Heart right ventricle (tissue), 16 donors: ENCODE measurements at regions of chr10 and their contacts with region 1.

Region 1: DNA sequence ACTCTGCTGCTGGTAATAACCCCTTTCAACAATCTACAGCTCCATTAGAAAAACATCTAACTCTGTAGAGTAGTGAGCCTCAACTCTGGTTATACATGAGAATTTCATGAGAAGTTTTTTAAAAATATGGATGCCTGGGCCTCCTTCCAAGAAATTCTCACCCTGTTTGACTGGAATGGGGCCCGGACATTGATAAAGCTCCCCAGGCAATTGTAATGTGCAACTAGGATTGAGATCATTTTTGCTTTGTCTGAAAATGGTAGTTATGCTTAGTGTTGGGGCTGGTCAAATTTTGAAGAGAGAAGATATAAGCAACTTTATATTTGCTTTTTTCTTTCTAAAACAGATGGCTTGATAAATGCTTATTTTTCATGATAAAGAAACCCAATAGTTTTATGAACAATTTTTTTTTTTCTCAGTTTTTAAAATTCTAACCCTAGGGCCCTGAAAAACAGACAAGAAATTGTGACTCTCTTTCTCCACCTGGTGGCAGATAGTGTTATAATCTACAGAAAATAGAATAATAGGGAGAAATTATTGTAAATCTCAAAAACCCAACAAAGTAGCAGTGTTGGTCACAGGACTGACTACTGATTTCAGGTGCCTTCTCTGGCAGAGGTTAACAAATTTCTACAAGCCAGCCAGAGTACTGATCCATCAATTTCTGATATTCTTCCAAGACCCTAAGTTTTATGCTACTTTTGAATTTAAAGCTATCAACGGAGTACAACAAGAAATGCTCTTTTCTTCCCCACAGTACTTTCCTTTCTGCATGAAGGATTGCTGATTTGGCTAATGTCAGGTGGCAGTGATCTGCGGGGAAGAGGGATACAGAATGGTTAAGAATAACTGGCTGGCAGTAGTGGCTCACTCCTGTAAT is 174.8 kb downstream of the DKK1 start:
- DNase-seq: no peak
- ATAC-seq: no peak
- H3K4me3 ChIP-seq: no peak overlapping the region
- H3K27ac ChIP-seq: no peak overlapping the region
- H3K4me1 ChIP-seq: no peaks in the 10 kb centered on the region
- H3K27me3 ChIP-seq: no peaks in the 10 kb centered on the region
- CTCF ChIP-seq: peak; percentile 27 to 68 (median 55)

Region 2: GRCh38 chr10:50988792-50989191 is 1500.1 kb before region 1 on chr10:
- intact Hi-C with region 1: loop called in 1 of 10 experiments (anchors 5 kb)
- DNase-seq: no peak
- ATAC-seq: no peak
- H3K4me3 ChIP-seq: peak overlapping the region in 7 of 10 donors; percentile 9 to 79 (median 71)
- H3K27ac ChIP-seq: peak overlapping the region in 7 of 10 donors; percentile 5 to 94 (median 41)
- H3K4me1 ChIP-seq: peaks cover 0 to 20% (median 6%) of the 10 kb centered on the region in 9 donors
- H3K27me3 ChIP-seq: peaks cover 0 to 39% (median 0%) of the 10 kb centered on the region in 7 donors
- CTCF ChIP-seq: peak in 8 of 9 donors; percentile 15 to 63 (median 46)

Region 3: DNA sequence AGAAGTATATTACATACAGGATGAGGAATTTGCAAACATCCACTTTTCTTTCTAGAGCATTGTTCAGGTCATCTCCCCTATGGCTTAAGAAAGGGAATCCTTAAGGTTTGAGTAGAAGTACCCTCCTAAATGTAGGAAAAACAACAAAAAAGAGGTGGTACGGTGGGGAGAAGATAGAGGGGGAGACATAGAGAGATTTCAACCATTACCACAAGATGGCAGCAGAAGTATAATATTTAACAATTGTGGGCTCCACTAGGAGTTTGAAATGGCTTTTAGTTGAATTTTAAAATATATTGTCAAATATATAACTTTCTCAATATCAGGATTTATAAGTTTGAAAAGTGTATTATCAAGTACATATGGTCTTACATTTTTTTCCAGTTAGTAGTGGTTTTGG is 1487.3 kb before region 1 on chr10:
- intact Hi-C with region 1: loop called in 1 of 10 experiments (anchors 5 kb)
- DNase-seq: no peak
- ATAC-seq: peak in 5 of 8 donors; percentile 54 to 88 (median 65)
- H3K4me3 ChIP-seq: no peak overlapping the region
- H3K27ac ChIP-seq: peak overlapping the region in 6 of 10 donors; percentile 3 to 59 (median 38)
- H3K4me1 ChIP-seq: peaks cover 0 to 74% (median 12%) of the 10 kb centered on the region in 9 donors
- H3K27me3 ChIP-seq: peaks cover 0 to 3% (median 0%) of the 10 kb centered on the region in 7 donors
- CTCF ChIP-seq: peak; percentile 31 to 73 (median 65)

Region 4: GRCh38 chr10:52308251-52309031 is 180.4 kb before region 1 on chr10:
- intact Hi-C with region 1: loop called (anchors 1 to 5 kb)
- DNase-seq: peak; percentile 36 to 46
- ATAC-seq: peak; percentile 80 to 92 (median 88)
- H3K4me3 ChIP-seq: peak overlapping the region; percentile 6 to 60 (median 52)
- H3K27ac ChIP-seq: no peak overlapping the region
- H3K4me1 ChIP-seq: peaks cover 0 to 9% (median 6%) of the 10 kb centered on the region in 9 donors
- H3K27me3 ChIP-seq: peaks cover 0 to 57% (median 21%) of the 10 kb centered on the region in 7 donors
- CTCF ChIP-seq: peak; percentile 28 to 75 (median 66)

Region 5: DNA sequence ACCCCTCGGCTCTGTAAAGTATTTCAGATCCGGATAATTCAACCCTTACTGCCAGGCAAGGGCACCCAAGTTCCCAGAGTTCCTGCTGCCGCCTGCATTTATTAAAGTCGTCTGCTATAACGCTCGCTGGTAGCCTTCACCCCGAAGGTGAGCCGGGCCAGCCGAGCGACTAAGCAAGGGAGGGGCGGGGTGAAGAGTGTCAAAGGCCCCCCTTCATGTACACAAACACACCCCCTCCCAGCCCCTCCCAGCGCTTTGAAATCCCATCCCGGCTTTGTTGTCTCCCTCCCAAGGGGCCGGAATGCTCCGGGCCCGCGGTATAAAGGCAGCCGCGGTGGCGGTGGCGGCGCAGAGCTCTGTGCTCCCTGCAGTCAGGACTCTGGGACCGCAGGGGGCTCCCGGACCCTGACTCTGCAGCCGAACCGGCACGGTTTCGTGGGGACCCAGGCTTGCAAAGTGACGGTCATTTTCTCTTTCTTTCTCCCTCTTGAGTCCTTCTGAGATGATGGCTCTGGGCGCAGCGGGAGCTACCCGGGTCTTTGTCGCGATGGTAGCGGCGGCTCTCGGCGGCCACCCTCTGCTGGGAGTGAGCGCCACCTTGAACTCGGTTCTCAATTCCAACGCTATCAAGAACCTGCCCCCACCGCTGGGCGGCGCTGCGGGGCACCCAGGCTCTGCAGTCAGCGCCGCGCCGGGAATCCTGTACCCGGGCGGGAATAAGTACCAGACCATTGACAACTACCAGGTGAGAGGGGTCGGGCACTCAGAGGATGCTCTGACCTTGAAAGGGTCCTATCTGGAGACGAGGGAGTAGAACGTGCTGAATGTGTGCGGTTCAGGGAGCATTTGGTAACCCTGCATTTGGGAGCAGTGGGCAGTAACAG is 174.7 kb before region 1 on chr10 and contains the start of gene DKK1:
- intact Hi-C with region 1: loop called in 9 of 10 experiments (anchors 2 to 5 kb)
- DNase-seq: peak; percentile 25 to 55
- ATAC-seq: peak; percentile 35 to 90 (median 84)
- H3K4me3 ChIP-seq: peak within 1 kb of the TSS; percentile 27 to 62 (median 54)
- H3K27ac ChIP-seq: no peak within 1 kb of the TSS
- H3K4me1 ChIP-seq: peaks cover 0 to 20% (median 17%) of the 10 kb centered on the region in 9 donors
- H3K27me3 ChIP-seq: peaks cover 0 to 66% (median 29%) of the 10 kb centered on the region in 7 donors
- CTCF ChIP-seq: peak; percentile 31 to 65 (median 61)
- total RNA-seq, gene DKK1: 0.26 to 1.2 (median 0.47) TPM in 5 of 10 donors, not detected in the others

Region 6: DNA sequence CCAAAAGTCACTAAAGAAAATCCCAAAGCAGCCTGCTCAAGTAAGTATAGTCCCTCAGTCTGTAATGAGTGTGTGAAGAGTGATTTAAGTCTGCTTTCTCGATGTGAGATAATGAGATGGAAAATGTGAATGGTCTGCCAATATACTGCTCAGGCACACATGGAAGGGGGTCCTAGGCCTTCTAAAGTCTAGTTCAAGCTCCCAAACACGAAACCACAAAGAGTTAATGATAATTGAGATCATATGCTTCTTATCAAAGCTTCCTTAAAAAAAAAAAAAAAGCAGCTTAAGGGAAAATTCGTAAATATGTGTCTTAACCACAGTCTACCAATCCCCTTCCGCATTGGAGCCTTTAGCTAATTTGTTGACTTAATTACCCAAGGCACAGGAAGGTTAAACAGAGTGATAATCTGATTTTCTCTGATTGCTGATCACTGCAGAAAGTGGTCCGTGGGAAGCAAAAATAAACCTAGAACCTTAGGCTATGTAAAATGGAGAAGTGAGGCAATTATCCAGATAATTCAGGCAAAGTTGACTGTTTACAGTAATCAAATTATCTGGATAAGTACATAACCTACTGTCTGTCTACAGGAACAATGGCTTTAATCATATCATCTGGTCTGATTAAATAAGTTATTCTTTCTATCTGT is 110.8 kb after region 1 on chr10:
- intact Hi-C with region 1: no loop called
- DNase-seq: no peak
- ATAC-seq: no peak
- H3K4me3 ChIP-seq: no peak overlapping the region
- H3K27ac ChIP-seq: no peak overlapping the region
- H3K4me1 ChIP-seq: no peaks in the 10 kb centered on the region
- H3K27me3 ChIP-seq: peaks cover 0 to 5% (median 0%) of the 10 kb centered on the region in 7 donors
- CTCF ChIP-seq: no peak